A549 (cell line): ENCODE measurements at regions of chr17 and their contacts with region 1.

Region 1: GRCh38 chr17:54992797-54993639 is 24.5 kb downstream of the STXBP4 start:
- DNase-seq: peak; percentile 49 to 71
- ATAC-seq: peak; percentile 80 to 90; a peak in 5 of 6 replicates
- H3K4me3 ChIP-seq: no peak overlapping the region
- H3K27ac ChIP-seq: no peak overlapping the region
- H3K4me1 ChIP-seq: no peaks in the 10 kb centered on the region
- CTCF ChIP-seq: peak; percentile 86
- EP300 ChIP-seq: no peak
- POLR2A ChIP-seq: no peak
- RAD21 ChIP-seq: peak; percentile 82 to 86

Region 2: DNA sequence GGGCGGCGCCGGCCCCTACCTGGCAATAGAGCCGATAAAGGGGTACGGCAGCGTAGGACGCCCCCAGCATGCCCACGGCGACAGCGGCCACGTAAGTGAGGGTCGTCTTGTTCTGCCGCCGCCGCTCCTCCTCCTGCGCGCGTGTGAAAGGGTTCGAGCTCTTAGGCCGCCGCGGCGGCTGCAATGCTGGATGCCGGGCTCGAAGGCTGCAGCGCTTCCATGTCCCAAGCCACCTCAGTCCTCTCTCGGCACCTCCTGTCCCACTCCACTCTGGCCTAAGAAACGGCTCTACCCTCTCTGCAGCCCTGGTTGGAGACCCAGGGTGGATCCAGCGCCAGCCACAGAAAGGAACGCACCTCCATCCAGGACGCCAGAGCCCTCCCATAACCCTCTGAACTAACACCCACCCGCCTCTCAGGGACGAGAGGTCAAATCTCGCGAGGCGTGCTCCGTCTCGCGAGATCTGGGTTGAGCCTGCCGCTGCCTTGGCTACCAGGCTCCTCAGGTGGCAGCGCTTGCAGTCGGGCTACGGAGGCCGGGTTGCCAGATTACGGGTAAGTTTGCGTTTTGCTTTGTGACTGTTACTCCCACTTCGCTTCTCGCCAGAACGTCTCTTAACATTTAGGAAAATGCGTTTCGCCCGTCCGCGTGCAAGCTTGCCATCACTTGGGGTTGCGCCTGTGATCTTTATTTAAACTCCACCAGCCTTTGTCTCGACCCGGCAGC is 24.6 kb before region 1 on chr17 and contains the starts of genes COX11 and STXBP4:
- CTCF ChIA-PET with region 1: interaction called, 13 read pairs
- POLR2A ChIA-PET with region 1: no interaction called
- DNase-seq: peak; percentile 91 to 98
- ATAC-seq: peak; percentile 93 to 99
- H3K4me3 ChIP-seq: peak within 1 kb of the TSS; percentile 76
- H3K27ac ChIP-seq: peak within 1 kb of the TSS; percentile 88 to 94
- H3K4me1 ChIP-seq: peaks cover 32% of the 10 kb centered on the region
- CTCF ChIP-seq: no peak; the same call in 1 of the 3 replicates
- EP300 ChIP-seq: no peak
- POLR2A ChIP-seq: peak; percentile 93
- RAD21 ChIP-seq: no peak; a peak in 1 of 5 replicates
- polyA plus RNA-seq, gene COX11: 77.4 and 95.4 TPM in 2 replicates
- polyA plus RNA-seq, gene STXBP4: 13.1 and 16.0 TPM in 2 replicates

Region 3: GRCh38 chr17:55295411-55296170 is 302.6 kb after region 1 on chr17:
- CTCF ChIA-PET with region 1: interaction called, 47 read pairs
- POLR2A ChIA-PET with region 1: no interaction called
- DNase-seq: peak; percentile 68 to 90
- ATAC-seq: peak; percentile 85 to 96
- H3K4me3 ChIP-seq: no peak overlapping the region
- H3K27ac ChIP-seq: peak overlapping the region in 1 of 2 experiments; percentile 11; a peak in 3 of 6 replicates
- H3K4me1 ChIP-seq: 0 out of 3 replicates have a peak, but pooled peaks cover 3% of the 10 kb centered on the region
- CTCF ChIP-seq: peak; percentile 90
- EP300 ChIP-seq: no peak
- POLR2A ChIP-seq: no peak
- RAD21 ChIP-seq: peak; percentile 86 to 91

Region 4: GRCh38 chr17:55348749-55349354 is 355.8 kb after region 1 on chr17:
- CTCF ChIA-PET with region 1: interaction called, 99 read pairs
- POLR2A ChIA-PET with region 1: no interaction called
- DNase-seq: peak; percentile 40 to 66
- ATAC-seq: peak; percentile 74 to 89; a peak in 5 of 6 replicates
- H3K4me3 ChIP-seq: no peak overlapping the region
- H3K27ac ChIP-seq: peak overlapping the region; percentile 23 to 56; a peak in 5 of 6 replicates
- H3K4me1 ChIP-seq: peaks cover 4% of the 10 kb centered on the region; the same call in 1 of the 3 replicates
- CTCF ChIP-seq: peak; percentile 94
- EP300 ChIP-seq: no peak
- POLR2A ChIP-seq: no peak
- RAD21 ChIP-seq: peak; percentile 83 to 86

Region 5: GRCh38 chr17:55513885-55514591 is 521.0 kb after region 1 on chr17:
- CTCF ChIA-PET with region 1: interaction called, 15 read pairs
- POLR2A ChIA-PET with region 1: no interaction called
- DNase-seq: peak; percentile 61 to 79
- ATAC-seq: peak; percentile 55 to 88
- H3K4me3 ChIP-seq: no peak overlapping the region
- H3K27ac ChIP-seq: peak overlapping the region; percentile 69 to 74
- H3K4me1 ChIP-seq: peaks cover 9% of the 10 kb centered on the region
- CTCF ChIP-seq: peak; percentile 98
- EP300 ChIP-seq: no peak
- POLR2A ChIP-seq: no peak
- RAD21 ChIP-seq: peak; percentile 98 to 99